G401 (cell line): ENCODE measurements at regions of chr3 and their contacts with region 1.

Region 1: GRCh38 chr3:50423543-50423942 is 64.2 kb upstream of the TMEM115 start:
- DNase-seq: no peak

Region 2: GRCh38 chr3:50260027-50260941 is 163.3 kb before region 1 on chr3:
- in situ Hi-C with region 1: no loop called
- DNase-seq: peak; percentile 90

Region 3: GRCh38 chr3:50536471-50537180 is 113.1 kb after region 1 on chr3:
- in situ Hi-C with region 1: loop called (anchors 5 kb)
- DNase-seq: no peak